Heart right ventricle (tissue), 16 donors: ENCODE measurements at regions of chr9 and their contacts with region 1.

Region 1: GRCh38 chr9:113657703-113658544 is 194.4 kb downstream of the RGS3 start:
- DNase-seq: peak; percentile 87 to 88
- ATAC-seq: peak; percentile 69 to 80 (median 75)
- H3K4me3 ChIP-seq: no peak overlapping the region
- H3K27ac ChIP-seq: peak overlapping the region in 6 of 10 donors; percentile 13 to 60 (median 41)
- H3K4me1 ChIP-seq: peaks cover 20 to 54% (median 39%) of the 10 kb centered on the region in 9 donors
- H3K27me3 ChIP-seq: no peaks in the 10 kb centered on the region
- CTCF ChIP-seq: peak; percentile 89 to 98 (median 95)

Region 2: DNA sequence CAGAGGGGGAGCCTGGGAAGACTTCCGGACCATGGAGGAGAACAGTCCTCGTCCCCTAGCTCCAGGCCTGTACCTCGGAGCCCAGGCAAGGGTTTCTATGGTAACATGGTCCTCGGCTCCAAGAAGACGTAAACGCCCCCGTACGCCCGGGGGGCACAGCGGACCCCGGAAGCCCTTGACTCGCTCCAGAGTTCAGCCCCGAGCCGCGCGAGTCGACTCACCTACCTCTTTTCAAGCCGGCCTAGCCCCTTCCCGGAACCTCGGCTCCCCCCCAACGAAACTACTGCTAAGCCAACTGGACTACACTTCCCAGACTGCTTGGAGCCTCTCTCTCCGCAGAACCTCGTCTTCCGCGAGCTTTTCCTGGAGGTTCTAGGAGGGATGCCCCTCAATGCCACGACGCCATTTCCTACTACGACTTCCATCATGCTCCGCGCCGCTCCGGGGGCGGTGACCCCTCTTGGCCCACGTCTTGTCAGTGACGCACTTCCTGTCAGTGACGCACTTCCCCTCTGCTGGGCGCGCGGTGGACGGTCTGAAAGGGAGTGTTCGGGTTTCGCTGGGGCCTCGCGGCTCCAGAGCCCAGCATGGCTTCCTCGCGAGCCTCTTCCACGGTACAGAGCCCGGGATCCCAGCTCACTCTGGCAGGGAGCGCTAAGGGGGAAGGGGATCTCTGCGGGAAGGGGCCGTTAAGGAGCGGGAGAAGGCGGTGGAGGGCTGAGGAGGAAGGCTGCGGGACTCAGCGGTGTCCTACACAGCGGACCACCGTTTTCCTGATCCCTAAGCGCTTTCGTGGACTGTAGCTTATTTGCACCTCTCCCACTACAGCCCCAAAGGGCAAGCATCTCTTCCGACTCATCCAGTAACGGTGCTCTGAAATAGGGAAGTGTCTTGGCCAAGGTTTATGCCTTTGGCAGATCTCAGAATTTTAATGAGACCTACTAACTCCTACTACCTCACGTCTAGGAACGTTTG is 382.5 kb before region 1 on chr9 and contains the starts of genes CDC26 and PRPF4:
- intact Hi-C with region 1: loop called in 3 of 10 experiments (anchors 2 to 5 kb)
- DNase-seq: peak; percentile 96 to 98
- ATAC-seq: peak; percentile 98 to 99 (median 98)
- H3K4me3 ChIP-seq: peak within 1 kb of the TSS; percentile 36 to 89 (median 78)
- H3K27ac ChIP-seq: peak within 1 kb of the TSS; percentile 63 to 95 (median 90)
- H3K4me1 ChIP-seq: peaks cover 5 to 50% (median 23%) of the 10 kb centered on the region in 9 donors
- H3K27me3 ChIP-seq: no peaks in the 10 kb centered on the region
- CTCF ChIP-seq: no peak
- total RNA-seq, gene CDC26: 26.7 to 39.7 (median 30.8) TPM
- total RNA-seq, gene PRPF4: 10.7 to 17.2 (median 13.3) TPM

Region 3: GRCh38 chr9:113309204-113309813 is 348.6 kb before region 1 on chr9:
- intact Hi-C with region 1: loop called in 4 of 10 experiments (anchors 5 kb)
- DNase-seq: peak in 1 of 2 donors; percentile 34
- ATAC-seq: peak in 3 of 8 donors; percentile 69 to 76 (median 72)
- H3K4me3 ChIP-seq: no peak overlapping the region
- H3K27ac ChIP-seq: peak overlapping the region in 3 of 10 donors; percentile 71 to 77 (median 74)
- H3K4me1 ChIP-seq: peaks cover 0 to 28% (median 18%) of the 10 kb centered on the region in 9 donors
- H3K27me3 ChIP-seq: no peaks in the 10 kb centered on the region
- CTCF ChIP-seq: peak; percentile 41 to 80 (median 66)

Region 4: DNA sequence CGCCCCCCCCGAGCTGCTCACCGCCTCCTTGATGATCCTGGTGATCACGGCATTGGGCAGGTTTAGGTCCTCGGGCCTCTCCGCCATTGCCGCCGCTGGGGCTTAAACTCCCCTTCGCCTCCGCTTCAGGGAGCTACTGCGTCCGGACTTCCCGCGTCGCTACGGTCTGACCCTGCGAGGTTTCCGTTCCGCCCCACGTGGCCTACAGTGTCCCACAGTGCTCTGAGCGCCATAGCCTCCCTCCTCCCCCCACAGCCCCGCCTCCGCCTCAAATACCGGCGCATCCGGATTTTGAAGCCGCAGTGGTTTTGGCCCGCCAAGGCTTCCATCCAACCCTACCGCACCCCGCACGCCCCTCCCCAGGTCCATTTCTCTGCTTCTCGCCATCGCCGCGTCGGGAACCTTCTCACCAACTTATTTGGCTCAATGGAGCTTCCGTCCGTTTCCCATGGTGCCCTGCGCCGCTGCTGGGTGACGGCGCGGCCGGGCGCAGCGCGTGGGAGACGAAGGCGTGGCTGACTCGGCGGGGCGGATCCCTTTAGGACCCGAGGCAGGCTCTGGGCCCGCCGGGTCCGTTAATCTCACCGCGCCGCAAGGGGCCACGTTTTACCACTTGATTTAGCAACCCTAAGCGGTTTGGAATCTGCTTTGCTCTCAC is 247.6 kb before region 1 on chr9 and contains the starts of genes C9orf43 and POLE3:
- intact Hi-C with region 1: loop called in 1 of 10 experiments (anchors 5 kb)
- DNase-seq: peak; percentile 95
- ATAC-seq: peak; percentile 97 to 99 (median 98)
- H3K4me3 ChIP-seq: peak within 1 kb of the TSS; percentile 71 to 94 (median 80)
- H3K27ac ChIP-seq: peak within 1 kb of the TSS; percentile 88 to 98 (median 96)
- H3K4me1 ChIP-seq: peaks cover 2 to 31% (median 25%) of the 10 kb centered on the region in 9 donors
- H3K27me3 ChIP-seq: no peaks in the 10 kb centered on the region
- CTCF ChIP-seq: peak in 2 of 9 donors; percentile 18 to 25
- total RNA-seq, gene C9orf43: 0.17 to 1.1 (median 0.31) TPM in 8 of 10 donors, not detected in the others
- total RNA-seq, gene POLE3: 19.0 to 26.9 (median 23.1) TPM

Region 5: DNA sequence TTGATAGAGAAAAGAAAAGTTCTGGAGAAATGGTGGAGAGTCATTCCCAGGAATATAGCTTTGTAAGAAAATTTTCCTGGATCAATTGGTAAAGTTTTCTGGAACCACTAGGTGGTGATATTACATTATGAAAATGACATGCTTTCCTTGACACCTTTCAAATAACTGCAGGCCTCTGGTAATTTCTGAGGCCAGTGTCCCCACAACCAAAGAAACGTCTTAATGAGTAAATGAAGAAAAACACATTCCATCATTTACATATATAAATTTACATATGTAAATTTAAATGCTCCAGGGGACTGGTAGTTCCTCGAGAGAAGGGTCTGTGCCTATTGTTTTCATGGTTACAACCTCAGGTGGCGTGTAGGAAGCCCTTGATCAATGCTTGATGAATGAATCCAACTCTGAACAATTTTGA is 211.6 kb before region 1 on chr9:
- intact Hi-C with region 1: loop called (anchors 2 to 5 kb)
- DNase-seq: no peak
- ATAC-seq: peak; percentile 35 to 83 (median 71)
- H3K4me3 ChIP-seq: no peak overlapping the region
- H3K27ac ChIP-seq: peak overlapping the region in 6 of 10 donors; percentile 15 to 74 (median 40)
- H3K4me1 ChIP-seq: peaks cover 0 to 20% (median 7%) of the 10 kb centered on the region in 9 donors
- H3K27me3 ChIP-seq: no peaks in the 10 kb centered on the region
- CTCF ChIP-seq: peak; percentile 37 to 81 (median 71)

Region 6: DNA sequence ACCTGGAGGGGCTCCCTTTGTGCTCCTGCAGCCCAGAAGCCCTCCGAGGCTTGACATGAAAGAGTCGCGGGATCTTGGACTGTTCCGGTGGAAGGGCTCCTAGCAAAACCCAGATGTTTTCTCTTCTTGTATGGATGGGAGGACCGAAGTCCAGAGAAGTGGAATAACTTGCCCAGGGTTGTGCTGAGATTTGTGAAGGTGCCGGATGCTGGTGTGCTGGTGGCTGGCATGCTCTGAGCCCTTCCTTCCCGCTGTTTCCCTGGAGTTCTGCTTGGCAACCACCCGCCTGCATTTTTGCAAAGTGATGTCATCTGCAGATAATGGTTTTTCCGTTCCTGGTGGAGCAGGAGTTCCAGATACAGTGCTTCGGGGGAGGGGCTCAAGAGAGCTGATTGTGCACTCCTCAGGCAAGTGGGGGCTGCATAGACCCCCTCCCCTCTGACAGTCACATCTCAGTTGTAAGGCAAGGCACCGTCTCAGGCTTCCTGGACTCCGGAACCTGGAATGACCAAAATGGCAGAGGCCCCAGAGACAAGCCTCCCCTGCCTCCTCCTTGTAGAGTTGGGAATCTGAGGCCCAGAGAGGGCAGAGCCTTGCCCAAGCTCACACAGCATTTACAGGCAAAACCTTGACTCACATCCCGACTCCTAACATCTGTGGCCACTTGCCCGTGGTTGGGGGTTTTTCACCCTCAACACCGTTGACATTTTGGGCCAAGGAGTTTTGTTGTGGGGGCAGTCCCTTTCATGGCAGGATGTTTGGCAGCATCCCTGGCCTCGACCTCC is 37.4 kb before region 1 on chr9:
- intact Hi-C with region 1: loop called in 3 of 10 experiments (anchors 1 to 2 kb)
- DNase-seq: peak; percentile 53 to 86
- ATAC-seq: peak; percentile 55 to 85 (median 74)
- H3K4me3 ChIP-seq: peak overlapping the region in 4 of 10 donors; percentile 5 to 31 (median 20)
- H3K27ac ChIP-seq: peak overlapping the region; percentile 83 to 98 (median 90)
- H3K4me1 ChIP-seq: peaks cover 21 to 86% (median 71%) of the 10 kb centered on the region in 9 donors
- H3K27me3 ChIP-seq: no peaks in the 10 kb centered on the region
- CTCF ChIP-seq: no peak

Region 7: DNA sequence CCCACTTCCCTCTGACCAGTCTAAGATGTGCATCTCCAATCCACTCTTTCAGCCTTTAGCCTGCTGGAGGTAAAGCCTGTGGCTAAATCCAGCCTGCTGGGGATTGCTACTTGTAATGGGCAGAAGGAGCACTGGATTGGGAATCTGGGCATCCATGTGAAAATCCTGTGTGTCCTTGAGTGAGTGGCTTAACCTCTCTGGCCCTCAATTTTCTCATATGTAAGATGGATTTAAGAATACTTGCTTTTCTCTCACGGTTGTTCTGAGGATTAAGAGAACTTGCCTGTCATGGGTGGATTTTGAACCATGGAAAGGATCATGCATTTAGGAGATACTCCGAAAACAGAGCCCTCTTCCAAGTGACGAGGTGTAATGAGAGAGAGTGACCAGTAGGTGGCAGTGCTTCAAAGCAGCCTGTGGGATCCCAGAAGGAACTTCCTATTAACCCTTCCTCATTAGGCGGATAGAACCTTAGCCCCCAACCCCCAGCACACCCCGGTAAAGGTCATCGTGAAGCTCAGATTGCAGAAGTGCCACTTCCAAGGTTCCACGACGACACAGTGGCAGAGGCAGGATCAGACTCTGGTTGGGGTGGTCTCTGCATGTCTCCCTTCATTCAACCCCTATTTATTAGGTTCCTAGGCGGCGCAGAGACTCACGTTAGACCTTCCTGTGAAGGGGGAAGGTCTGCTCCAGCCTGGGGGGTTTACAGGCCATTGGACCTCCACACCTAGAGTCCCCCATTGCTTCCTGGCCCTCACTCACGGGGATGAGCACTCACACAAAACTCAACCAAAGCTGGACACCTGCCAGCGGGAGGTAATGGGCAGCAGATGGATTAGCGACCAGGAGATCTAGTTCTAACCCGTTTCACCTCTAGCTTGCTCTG is 149.5 kb after region 1 on chr9:
- intact Hi-C with region 1: no loop called
- DNase-seq: peak in 1 of 2 donors; percentile 48
- ATAC-seq: peak; percentile 47 to 83 (median 70)
- H3K4me3 ChIP-seq: peak overlapping the region in 5 of 10 donors; percentile 7 to 24 (median 21)
- H3K27ac ChIP-seq: no peak overlapping the region
- H3K4me1 ChIP-seq: peaks cover 0 to 12% (median 4%) of the 10 kb centered on the region in 9 donors
- H3K27me3 ChIP-seq: peaks cover 0 to 16% (median 2%) of the 10 kb centered on the region in 7 donors
- CTCF ChIP-seq: peak; percentile 82 to 94 (median 90)